ENCODE measurements at regions of chr7 and their contacts with region 1.

Region 1: DNA sequence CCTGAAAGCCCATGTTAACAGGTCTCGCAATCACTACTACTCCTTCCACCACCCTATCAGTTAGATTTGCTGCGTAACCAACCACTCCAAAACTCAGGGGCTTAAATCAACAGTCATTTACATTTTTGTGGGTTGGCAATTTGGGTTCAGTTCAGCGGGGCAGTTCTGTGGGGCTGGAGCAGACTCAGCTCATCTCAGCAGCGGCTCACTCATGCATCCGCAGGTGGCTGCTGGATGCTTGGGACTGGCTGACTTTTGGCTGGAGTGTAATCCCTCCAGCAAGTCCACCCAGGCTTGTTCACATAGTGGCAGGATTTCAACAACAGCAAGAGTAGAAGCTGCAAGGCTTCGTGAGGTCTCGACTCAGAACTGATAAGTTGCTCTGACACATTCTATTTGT is 79.2 kb downstream of the NEUROD6 start:
- DNase-seq: no peak
- ATAC-seq: no peak
- H3K4me3 Mint-ChIP-seq: no peak overlapping the region
- H3K27ac Mint-ChIP-seq: no peak overlapping the region
- H3K4me1 Mint-ChIP-seq: no peaks in the 10 kb centered on the region
- H3K27me3 Mint-ChIP-seq: no peaks in the 10 kb centered on the region
- CTCF ChIP-seq: no peak

Region 2: DNA sequence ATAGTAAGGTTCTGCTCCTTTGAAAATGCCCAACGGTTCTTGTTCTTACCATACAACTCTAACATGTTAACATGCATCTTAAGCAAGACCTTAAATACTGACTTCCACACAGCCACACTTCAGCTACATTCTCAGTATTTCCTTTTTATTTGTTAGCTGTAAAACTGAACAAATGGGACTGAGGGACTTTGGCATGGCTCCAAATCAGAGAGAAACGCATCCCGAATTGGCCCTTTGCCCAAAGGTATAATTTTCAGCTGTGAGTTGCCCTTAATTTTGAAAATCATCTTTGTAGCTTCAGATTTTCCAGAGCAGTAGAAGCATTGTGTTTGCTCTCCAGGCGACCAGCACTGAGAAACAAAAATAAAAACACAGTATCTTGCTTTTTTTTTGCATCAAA is 22.8 kb after region 1 on chr7:
- CTCF ChIA-PET with region 1: no interaction called
- POLR2A ChIA-PET with region 1: no interaction called
- intact Hi-C with region 1: no loop called
- DNase-seq: no peak
- ATAC-seq: no peak
- H3K4me3 Mint-ChIP-seq: no peak overlapping the region
- H3K27ac Mint-ChIP-seq: no peak overlapping the region
- H3K4me1 Mint-ChIP-seq: no peaks in the 10 kb centered on the region
- H3K27me3 Mint-ChIP-seq: no peaks in the 10 kb centered on the region
- CTCF ChIP-seq: no peak

Region 3: GRCh38 chr7:31595390-31595789 is 334.0 kb after region 1 on chr7:
- CTCF ChIA-PET with region 1: no interaction called
- POLR2A ChIA-PET with region 1: no interaction called
- intact Hi-C with region 1: loop called (anchors 10 kb)
- DNase-seq: no peak
- ATAC-seq: no peak
- H3K4me3 Mint-ChIP-seq: no peak overlapping the region
- H3K27ac Mint-ChIP-seq: no peak overlapping the region
- H3K4me1 Mint-ChIP-seq: no peaks in the 10 kb centered on the region
- H3K27me3 Mint-ChIP-seq: no peaks in the 10 kb centered on the region
- CTCF ChIP-seq: no peak

Measured in activated B cell treated with CpG ODN at 0.5 μM for 24 hours (primary cell).